Natural killer cell (primary cell): ENCODE measurements at regions of chr19 and their contacts with region 1.

Region 1: DNA sequence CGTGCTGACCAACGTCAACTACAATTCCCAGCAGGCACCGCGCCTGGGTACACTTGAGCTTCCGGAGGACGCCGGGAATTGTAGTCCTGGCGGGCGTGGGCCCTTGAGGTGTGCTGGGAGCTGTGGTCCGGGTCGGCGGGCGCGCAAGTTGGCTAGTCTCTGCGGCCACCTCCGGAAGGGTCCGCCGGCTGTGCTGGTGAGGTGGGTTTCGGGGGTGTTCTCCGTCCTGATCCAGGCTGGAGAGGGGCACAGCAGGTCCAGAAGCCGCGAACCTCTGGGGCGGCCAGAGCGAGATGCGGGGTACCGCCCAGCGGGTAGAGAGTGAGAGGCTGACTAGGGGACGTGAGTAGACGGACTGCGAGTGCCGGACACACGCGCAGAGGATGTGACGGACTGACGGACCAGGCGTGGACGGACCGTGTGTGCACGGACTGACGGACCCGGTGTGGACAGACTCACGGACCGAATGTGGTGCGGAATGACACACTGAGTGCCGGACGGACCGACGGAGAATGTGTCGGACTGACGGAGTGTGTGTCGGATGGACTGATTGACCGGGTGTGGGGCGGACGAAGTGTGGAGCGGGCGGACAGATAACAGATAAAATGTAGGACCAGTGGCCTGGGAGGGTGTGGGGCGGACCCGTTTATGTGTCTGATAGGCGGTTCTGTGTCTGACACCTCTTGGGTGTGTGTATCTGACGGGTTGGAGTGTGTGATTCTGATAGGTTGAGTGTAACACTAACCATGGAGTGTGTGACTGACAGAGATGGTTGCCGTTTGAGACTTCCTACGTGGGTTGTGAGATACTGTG is at the start of gene ZSCAN22:
- DNase-seq: peak; percentile 87 to 93
- ATAC-seq: peak; percentile 71 to 87 (median 74)
- H3K4me3 ChIP-seq: peak within 1 kb of the TSS; percentile 61
- H3K4me3 Mint-ChIP-seq: no peak within 1 kb of the TSS
- H3K27ac ChIP-seq: peak within 1 kb of the TSS; percentile 96
- H3K27ac Mint-ChIP-seq: no peak within 1 kb of the TSS
- H3K4me1 ChIP-seq: peaks cover 29% of the 10 kb centered on the region
- H3K4me1 Mint-ChIP-seq: no peaks in the 10 kb centered on the region
- H3K27me3 ChIP-seq: no peaks in the 10 kb centered on the region
- H3K27me3 Mint-ChIP-seq: no peaks in the 10 kb centered on the region
- CTCF ChIP-seq: no peak
- total RNA-seq, gene ZSCAN22: 2.9 to 4.8 (median 3.2) TPM

Region 2: DNA sequence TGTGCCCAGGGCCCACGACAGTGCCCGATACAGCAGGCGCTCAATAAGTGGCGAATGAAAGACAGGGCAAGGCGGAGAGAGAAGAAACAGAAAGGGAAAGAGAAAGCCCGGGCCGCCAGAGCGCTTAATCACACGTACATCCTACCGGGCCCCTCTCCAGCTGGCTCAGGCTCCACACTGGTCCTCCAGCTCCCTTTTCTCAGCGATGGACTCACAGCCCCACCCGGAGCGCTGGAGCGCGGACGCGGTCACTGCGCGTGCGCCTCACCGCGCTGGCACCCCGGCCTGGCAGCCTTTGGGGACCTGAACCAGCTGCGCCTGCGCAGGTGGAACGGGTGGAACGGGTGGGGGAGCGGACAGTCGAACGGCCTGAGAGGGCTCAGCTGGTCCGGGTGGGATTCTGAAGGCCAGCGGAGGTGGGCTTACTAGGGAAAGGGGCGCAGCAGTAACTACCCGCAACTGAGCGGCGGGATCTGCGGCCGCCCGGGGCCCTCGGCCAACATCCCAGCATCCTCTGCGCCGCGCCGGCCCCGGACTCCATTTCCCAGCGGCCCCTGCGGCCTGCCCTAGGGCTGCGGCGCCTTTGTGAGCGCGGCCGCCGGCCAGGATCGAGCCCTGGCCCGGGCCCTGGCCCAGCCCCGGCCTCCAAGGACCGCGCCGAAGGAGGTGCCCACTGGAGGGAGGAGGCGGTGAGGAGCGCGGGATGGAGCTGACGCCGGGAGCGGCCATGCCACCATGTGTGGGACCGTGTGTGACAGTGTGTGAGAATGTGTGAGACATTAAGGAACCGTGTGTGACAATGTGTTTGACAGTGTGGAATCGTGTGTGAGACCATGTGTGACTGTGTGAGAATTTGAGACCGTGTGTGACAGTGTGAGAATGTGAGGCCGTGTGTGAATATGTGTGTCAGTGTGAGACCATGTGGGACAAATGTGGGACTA is 1923.1 kb before region 1 on chr19 and contains the start of gene ZNF583:
- intact Hi-C with region 1: loop called (anchors 10 kb)
- DNase-seq: peak; percentile 90 to 95
- ATAC-seq: peak; percentile 57 to 87 (median 78)
- H3K4me3 ChIP-seq: peak within 1 kb of the TSS; percentile 88
- H3K4me3 Mint-ChIP-seq: peak within 1 kb of the TSS; percentile 92
- H3K27ac ChIP-seq: peak within 1 kb of the TSS; percentile 99
- H3K27ac Mint-ChIP-seq: peak within 1 kb of the TSS; percentile 71 to 93
- H3K4me1 ChIP-seq: peaks cover 22% of the 10 kb centered on the region
- H3K4me1 Mint-ChIP-seq: peaks cover 19 to 43% of the 10 kb centered on the region in 2 donors
- H3K27me3 ChIP-seq: no peaks in the 10 kb centered on the region
- H3K27me3 Mint-ChIP-seq: no peaks in the 10 kb centered on the region
- CTCF ChIP-seq: no peak
- total RNA-seq, gene ZNF583: 2.7 to 5.1 (median 3.3) TPM

Region 3: DNA sequence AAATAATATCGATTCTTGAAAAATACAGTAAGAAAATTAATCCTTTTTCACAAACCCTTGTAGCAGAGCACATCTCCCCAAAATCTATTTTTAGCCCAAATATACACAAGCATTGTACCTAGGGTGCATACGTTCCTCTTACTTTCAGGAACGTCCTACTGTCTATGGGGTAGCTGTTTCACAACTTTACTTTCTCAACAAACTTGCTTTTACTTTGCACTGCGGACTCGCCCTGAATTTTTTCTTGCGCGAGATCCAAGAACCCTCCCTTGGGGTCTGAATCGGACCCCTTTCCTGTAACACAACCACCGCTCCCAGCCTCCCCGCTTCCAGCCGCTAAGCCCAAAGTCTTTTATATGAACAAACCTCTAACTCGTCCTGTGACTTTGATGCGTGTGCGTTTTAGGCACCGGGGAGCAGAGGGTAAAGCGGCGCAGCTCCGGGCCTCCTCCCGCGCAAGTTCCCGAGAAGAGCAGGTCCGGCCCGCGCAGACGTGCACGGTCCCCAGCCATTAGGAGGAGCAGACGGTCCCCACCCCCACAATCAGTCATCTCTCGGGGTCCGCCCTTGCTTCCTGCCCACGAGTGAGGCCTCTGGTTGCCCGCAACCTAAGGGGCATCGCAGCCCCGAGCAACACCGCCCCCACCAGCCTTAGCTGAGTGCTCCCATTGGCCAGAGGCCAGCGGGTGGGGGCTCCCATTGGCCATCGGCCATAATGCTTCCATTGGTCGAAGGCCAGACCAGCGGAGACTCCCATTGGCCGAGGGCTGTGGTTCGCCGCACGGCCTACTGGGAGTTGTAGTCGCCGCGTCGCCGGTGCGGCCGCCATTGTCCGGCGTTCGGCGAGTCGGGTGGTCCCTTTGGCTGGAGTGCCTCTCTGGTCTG is 48.7 kb before region 1 on chr19 and contains the start of gene ZNF8:
- intact Hi-C with region 1: loop called (anchors 1 kb)
- DNase-seq: peak; percentile 93 to 97
- ATAC-seq: peak; percentile 97 to 100 (median 98)
- H3K4me3 ChIP-seq: peak within 1 kb of the TSS; percentile 94
- H3K4me3 Mint-ChIP-seq: peak within 1 kb of the TSS; percentile 96
- H3K27ac ChIP-seq: peak within 1 kb of the TSS; percentile 79
- H3K27ac Mint-ChIP-seq: peak within 1 kb of the TSS; percentile 94 to 99
- H3K4me1 ChIP-seq: peaks cover 13% of the 10 kb centered on the region
- H3K4me1 Mint-ChIP-seq: peaks cover 30 to 40% of the 10 kb centered on the region in 2 donors
- H3K27me3 ChIP-seq: no peaks in the 10 kb centered on the region
- H3K27me3 Mint-ChIP-seq: no peaks in the 10 kb centered on the region
- CTCF ChIP-seq: no peak
- total RNA-seq, gene ZNF8: 6.4 to 8.7 (median 7.7) TPM

Region 4: DNA sequence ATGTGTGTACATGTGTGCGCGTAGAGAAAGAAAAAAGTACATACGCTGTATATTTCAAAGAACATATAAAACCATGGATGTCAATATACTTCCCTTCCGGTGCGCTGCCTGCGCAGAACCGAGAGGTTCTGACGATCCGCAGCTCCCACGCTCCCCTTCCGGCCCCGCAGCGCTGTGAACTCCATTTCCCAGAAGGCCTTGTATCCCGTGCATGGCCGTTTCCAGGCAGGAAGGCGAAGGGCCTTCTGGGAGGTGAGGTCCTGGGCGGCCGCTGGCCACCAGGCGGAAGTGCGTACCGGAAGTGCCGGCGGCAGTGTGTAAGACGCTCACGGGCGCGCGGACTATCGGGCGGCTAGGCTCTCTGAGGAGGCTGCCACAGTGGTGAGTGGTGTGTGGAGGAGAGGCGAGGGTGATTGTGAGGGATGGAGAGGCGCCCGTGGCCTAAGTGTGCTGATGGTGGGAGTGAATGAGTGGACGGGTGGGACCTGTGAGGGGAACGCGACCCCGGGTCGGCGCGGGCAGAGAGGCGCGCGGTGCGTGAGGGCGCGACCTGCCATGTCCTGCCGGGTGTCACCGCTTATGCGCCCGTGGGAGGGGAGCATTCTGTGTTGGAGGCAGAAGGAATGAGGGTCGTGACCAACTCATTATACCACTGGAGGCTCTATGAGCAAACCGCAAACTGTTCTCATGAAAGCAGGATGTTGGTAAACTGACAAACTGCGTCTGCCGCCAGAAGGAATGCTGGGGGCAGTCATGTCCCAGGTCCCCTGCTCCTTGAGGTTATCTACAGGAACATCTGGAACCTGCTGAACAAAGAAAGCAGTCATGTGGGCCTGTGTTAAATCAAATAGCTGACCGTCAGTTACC is 21.8 kb before region 1 on chr19 and contains the start of gene ERVK3-1:
- intact Hi-C with region 1: loop called (anchors 1 kb)
- DNase-seq: peak; percentile 86 to 98
- ATAC-seq: peak; percentile 94 to 99 (median 95)
- H3K4me3 ChIP-seq: peak within 1 kb of the TSS; percentile 60
- H3K4me3 Mint-ChIP-seq: peak within 1 kb of the TSS; percentile 98
- H3K27ac ChIP-seq: peak within 1 kb of the TSS; percentile 84
- H3K27ac Mint-ChIP-seq: peak within 1 kb of the TSS; percentile 99
- H3K4me1 ChIP-seq: peaks cover 10% of the 10 kb centered on the region
- H3K4me1 Mint-ChIP-seq: peaks cover 40 to 55% of the 10 kb centered on the region in 2 donors
- H3K27me3 ChIP-seq: no peaks in the 10 kb centered on the region
- H3K27me3 Mint-ChIP-seq: no peaks in the 10 kb centered on the region
- CTCF ChIP-seq: no peak
- total RNA-seq, gene ERVK3-1: 96.1 to 142 (median 119) TPM

Region 5: GRCh38 chr19:58362272-58362994 is 35.3 kb after region 1 on chr19 and contains the start of gene ZNF497:
- intact Hi-C with region 1: loop called (anchors 1 kb)
- DNase-seq: peak; percentile 96 to 99
- ATAC-seq: peak; percentile 82 to 92 (median 86)
- H3K4me3 ChIP-seq: peak within 1 kb of the TSS; percentile 59
- H3K4me3 Mint-ChIP-seq: peak within 1 kb of the TSS; percentile 97
- H3K27ac ChIP-seq: peak within 1 kb of the TSS; percentile 84
- H3K27ac Mint-ChIP-seq: peak within 1 kb of the TSS; percentile 91 to 95
- H3K4me1 ChIP-seq: peaks cover 18% of the 10 kb centered on the region
- H3K4me1 Mint-ChIP-seq: peaks cover 13 to 20% of the 10 kb centered on the region in 2 donors
- H3K27me3 ChIP-seq: no peaks in the 10 kb centered on the region
- H3K27me3 Mint-ChIP-seq: no peaks in the 10 kb centered on the region
- CTCF ChIP-seq: no peak
- total RNA-seq, gene ZNF497: 0.40 to 0.61 (median 0.60) TPM

Region 6: DNA sequence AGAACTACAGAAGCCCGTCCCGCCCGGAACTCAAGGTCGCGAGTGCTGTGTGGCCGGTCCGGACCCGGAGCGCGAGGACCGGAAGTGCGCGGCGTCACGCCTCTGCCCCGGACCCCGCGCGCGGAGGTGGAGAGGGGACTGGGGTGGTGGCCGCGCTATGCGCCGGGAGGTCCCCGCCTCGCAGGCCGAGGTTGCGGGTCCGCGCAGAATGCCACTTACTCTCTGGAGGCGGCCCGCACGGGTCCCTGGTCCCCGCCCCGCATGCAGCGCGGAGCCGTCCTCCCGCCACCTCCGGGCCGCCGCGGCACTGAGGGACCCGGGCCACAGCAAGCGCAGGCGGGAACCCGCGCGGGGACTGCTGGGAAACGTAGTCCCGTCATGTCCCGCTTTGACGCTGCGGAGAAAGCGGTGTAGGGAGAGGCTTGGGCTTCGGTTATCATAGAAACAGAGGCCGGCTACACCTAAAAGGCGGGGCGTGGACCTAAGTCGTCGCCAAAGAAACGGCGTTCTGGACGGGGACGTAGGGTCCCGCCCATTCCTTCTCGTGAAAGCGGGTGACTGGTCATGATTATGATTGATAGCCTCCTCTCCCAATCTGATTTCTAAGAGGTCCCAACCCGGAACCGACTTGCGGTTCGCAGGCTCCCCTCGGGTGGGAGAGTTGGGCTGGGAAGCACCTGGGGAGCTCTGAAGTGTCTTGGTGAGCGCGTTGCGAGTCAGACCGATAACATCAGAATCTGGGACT is 53.8 kb after region 1 on chr19 and contains the start of gene ZNF837:
- intact Hi-C with region 1: loop called (anchors 2 kb)
- DNase-seq: peak; percentile 95 to 100
- ATAC-seq: peak; percentile 85 to 94 (median 86)
- H3K4me3 ChIP-seq: peak within 1 kb of the TSS; percentile 50
- H3K4me3 Mint-ChIP-seq: peak within 1 kb of the TSS; percentile 89
- H3K27ac ChIP-seq: peak within 1 kb of the TSS; percentile 92
- H3K27ac Mint-ChIP-seq: peak within 1 kb of the TSS; percentile 93 to 94
- H3K4me1 ChIP-seq: peaks cover 37% of the 10 kb centered on the region
- H3K4me1 Mint-ChIP-seq: peaks cover 13 to 29% of the 10 kb centered on the region in 2 donors
- H3K27me3 ChIP-seq: no peaks in the 10 kb centered on the region
- H3K27me3 Mint-ChIP-seq: no peaks in the 10 kb centered on the region
- CTCF ChIP-seq: no peak
- total RNA-seq, gene ZNF837: 0.63 to 1.4 (median 1.3) TPM

Region 7: DNA sequence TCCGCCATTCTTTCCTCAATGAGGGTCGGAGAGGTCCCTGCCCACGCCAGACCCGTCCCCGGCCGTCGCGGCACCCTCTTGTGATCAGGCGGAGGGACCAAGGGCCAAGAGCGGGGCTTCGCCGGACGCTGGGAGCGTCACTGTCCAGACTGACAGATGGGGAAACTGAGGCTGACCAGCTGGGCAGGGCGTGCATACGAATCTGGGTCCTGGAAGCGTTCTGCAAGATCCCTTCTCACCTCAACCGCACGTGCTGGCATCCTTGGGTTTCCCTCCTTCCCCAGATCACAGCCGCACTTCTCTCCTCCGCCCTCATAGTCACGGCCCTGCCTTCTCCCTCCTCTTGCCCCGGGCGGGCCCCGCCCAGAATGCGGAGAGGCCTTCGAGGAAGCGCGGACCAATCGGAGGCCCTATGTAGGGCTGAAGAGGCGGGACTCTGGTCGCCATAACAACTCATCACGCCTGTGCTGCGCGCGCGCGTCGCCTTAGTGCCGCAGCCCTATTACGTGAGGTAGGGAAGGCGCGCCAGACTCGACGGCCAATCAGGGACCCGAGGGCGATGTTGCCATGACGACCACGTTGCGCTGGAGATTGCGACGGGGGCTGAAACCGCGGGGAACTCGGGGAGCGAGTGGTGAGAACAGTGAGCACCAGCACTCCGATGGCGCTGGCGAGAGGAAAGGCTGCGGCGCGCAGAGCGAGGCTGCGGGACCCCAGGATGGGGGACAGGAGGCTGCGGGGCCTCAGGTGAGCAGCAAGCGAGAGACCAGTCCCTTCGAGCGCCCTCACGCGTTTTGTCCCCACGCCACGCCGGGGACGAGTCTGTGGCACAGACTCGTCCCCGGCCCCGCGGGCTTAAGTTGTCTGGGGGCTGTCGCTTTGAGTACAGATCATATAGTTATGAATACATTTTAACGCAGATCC is 74.1 kb after region 1 on chr19:
- intact Hi-C with region 1: loop called (anchors 2 kb)
- DNase-seq: peak; percentile 98 to 100
- ATAC-seq: peak; percentile 94 to 98 (median 96)
- H3K4me3 ChIP-seq: peak overlapping the region; percentile 76
- H3K4me3 Mint-ChIP-seq: peak overlapping the region; percentile 92
- H3K27ac ChIP-seq: peak overlapping the region; percentile 98
- H3K27ac Mint-ChIP-seq: peak overlapping the region; percentile 92 to 93
- H3K4me1 ChIP-seq: peaks cover 18% of the 10 kb centered on the region
- H3K4me1 Mint-ChIP-seq: peaks cover 14 to 15% of the 10 kb centered on the region in 2 donors
- H3K27me3 ChIP-seq: peaks cover 10% of the 10 kb centered on the region
- H3K27me3 Mint-ChIP-seq: peaks cover 0 to 19% of the 10 kb centered on the region in 2 donors
- CTCF ChIP-seq: no peak